Lower lobe of right lung (tissue), 2 donors: ENCODE measurements at regions of chr3 and their contacts with region 1.

Region 1: GRCh38 chr3:113287803-113288648 is 76.7 kb downstream of the BOC start:
- DNase-seq: no peak
- ATAC-seq: peak; percentile 52 to 70
- H3K4me3 ChIP-seq: no peak overlapping the region
- H3K27ac ChIP-seq: no peak overlapping the region
- H3K4me1 ChIP-seq: no peaks in the 10 kb centered on the region
- H3K27me3 ChIP-seq: no peaks in the 10 kb centered on the region
- CTCF ChIP-seq: peak; percentile 92

Region 2: DNA sequence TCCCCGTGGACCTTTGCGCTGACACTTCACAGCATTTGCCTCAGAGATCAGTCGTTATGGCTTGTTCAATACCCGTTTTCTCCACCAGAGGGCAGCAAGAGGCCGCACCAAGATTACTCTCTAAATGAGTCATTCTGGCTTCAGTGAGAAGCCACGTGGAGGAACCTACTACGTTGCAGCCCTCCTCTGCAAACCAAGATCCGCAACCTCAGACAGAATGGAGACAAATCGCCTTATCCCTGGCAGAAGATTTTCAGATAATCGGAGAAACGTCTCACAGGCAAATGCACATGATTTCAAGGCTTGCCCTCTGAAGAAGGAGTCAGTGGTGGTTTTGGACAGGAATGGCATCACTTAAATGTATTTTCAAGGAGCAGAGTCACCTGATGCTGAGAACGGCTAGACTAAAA is 236.7 kb before region 1 on chr3:
- intact Hi-C with region 1: loop called (anchors 5 kb)
- DNase-seq: peak; percentile 72
- ATAC-seq: peak; percentile 90 to 95
- H3K4me3 ChIP-seq: no peak overlapping the region
- H3K27ac ChIP-seq: no peak overlapping the region
- H3K4me1 ChIP-seq: peaks cover 36% of the 10 kb centered on the region
- H3K27me3 ChIP-seq: no peaks in the 10 kb centered on the region
- CTCF ChIP-seq: peak; percentile 96

Region 3: GRCh38 chr3:113136071-113136470 is 152.0 kb before region 1 on chr3:
- intact Hi-C with region 1: loop called (anchors 5 kb)
- DNase-seq: no peak
- ATAC-seq: no peak
- H3K4me3 ChIP-seq: no peak overlapping the region
- H3K27ac ChIP-seq: no peak overlapping the region
- H3K4me1 ChIP-seq: no peaks in the 10 kb centered on the region
- H3K27me3 ChIP-seq: no peaks in the 10 kb centered on the region
- CTCF ChIP-seq: peak; percentile 42

Region 4: DNA sequence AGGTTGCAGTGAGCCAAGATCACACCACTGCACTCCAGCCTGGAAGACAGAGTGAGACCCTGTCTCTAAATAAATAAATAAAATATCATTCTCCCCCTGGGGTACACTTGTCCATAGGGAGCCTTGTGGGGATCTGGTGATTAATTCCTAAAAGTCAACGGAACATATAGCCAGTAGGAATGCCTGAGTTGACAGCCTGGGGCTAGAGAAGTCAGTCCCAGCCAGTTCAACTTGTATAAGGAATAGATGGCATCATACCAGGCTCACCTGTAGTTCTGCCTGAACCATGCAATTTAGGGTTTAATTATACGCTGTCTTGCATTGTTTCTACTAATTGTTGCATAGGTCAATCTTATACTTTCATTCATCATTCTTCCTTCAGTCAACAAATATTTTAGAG is 82.5 kb before region 1 on chr3:
- intact Hi-C with region 1: no loop called
- DNase-seq: no peak
- ATAC-seq: no peak
- H3K4me3 ChIP-seq: no peak overlapping the region
- H3K27ac ChIP-seq: no peak overlapping the region
- H3K4me1 ChIP-seq: no peaks in the 10 kb centered on the region
- H3K27me3 ChIP-seq: no peaks in the 10 kb centered on the region
- CTCF ChIP-seq: no peak